Left cardiac atrium (tissue), 4 donors: ENCODE measurements at regions of chr17 and their contacts with region 1.

Region 1: GRCh38 chr17:63993368-63993985 is 4.7 kb upstream of the PRR29 start:
- DNase-seq: no peak
- ATAC-seq: no peak

Region 2: GRCh38 chr17:63919311-63919723 is 74.2 kb before region 1 on chr17:
- intact Hi-C with region 1: loop called (anchors 2 to 5 kb)
- DNase-seq: peak; percentile 44
- ATAC-seq: peak; percentile 89 to 92

Region 3: GRCh38 chr17:64216338-64217248 is 223.1 kb after region 1 on chr17:
- intact Hi-C with region 1: no loop called
- DNase-seq: peak; percentile 40
- ATAC-seq: peak; percentile 61 to 66